ENCODE measurements at regions of chr14 and their contacts with region 1.

Region 1: GRCh38 chr14:100375963-100376735 is 53.0 kb downstream of the SLC25A47 start:
- DNase-seq: peak; percentile 96
- ATAC-seq: peak; percentile 70
- H3K4me3 Mint-ChIP-seq: peak within 1 kb of the TSS; percentile 99
- H3K27ac Mint-ChIP-seq: peak within 1 kb of the TSS; percentile 98
- H3K4me1 Mint-ChIP-seq: peaks cover 37% of the 10 kb centered on the region
- H3K27me3 Mint-ChIP-seq: no peaks in the 10 kb centered on the region

Region 2: GRCh38 chr14:99604283-99604765 is 771.8 kb before region 1 on chr14:
- CTCF ChIA-PET with region 1: interaction called, 3 read pairs
- POLR2A ChIA-PET with region 1: no interaction called
- intact Hi-C with region 1: loop called in 1 of 2 experiments (anchors 1 kb)
- DNase-seq: peak; percentile 96
- ATAC-seq: peak; percentile 94
- H3K4me3 Mint-ChIP-seq: peak overlapping the region; percentile 72
- H3K27ac Mint-ChIP-seq: peak overlapping the region; percentile 72
- H3K4me1 Mint-ChIP-seq: peaks cover 28% of the 10 kb centered on the region
- H3K27me3 Mint-ChIP-seq: peaks cover 2% of the 10 kb centered on the region

Region 3: DNA sequence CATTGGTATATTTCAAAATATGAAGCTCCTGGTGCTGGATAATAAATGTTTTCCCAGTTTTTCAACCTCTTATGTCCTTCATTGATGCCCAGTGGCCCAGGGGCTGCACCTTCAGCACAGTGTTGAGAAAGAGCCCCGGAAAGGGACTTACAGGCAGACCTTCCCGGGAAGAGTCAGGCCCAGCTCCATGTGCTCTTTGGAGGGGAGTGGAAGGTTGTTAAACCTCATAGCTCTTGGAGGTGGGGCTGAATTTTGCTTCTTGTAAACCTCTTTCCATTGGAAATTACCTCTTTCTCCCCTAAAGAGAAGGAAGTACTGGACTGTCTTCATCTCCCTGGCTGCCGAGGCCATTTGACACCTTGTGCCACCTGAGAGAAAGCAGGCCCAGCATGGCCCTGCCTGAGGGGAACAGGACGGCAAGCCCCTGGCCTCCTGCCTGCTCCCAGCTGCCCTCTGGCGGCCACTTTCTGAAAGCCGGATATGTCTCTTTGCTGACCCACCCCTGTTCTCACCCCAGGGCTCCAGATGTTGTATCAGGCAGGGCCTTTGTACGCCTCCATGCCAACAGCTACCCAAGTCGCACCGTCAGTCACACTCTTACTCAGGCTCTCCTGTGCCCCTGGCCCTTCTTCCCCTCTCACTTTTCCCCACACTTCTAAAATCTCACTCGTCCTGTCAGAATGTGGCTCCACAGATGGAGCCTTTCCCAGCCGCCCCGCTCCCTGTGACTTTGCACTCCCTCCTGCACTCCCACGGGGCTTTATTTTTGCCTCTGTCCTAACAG is 267.9 kb before region 1 on chr14:
- CTCF ChIA-PET with region 1: no interaction called
- POLR2A ChIA-PET with region 1: no interaction called
- intact Hi-C with region 1: loop called in 1 of 2 experiments (anchors 1 kb)
- DNase-seq: peak; percentile 94
- ATAC-seq: peak; percentile 53
- H3K4me3 Mint-ChIP-seq: no peak overlapping the region
- H3K27ac Mint-ChIP-seq: peak overlapping the region; percentile 92
- H3K4me1 Mint-ChIP-seq: peaks cover 74% of the 10 kb centered on the region
- H3K27me3 Mint-ChIP-seq: no peaks in the 10 kb centered on the region

Region 4: DNA sequence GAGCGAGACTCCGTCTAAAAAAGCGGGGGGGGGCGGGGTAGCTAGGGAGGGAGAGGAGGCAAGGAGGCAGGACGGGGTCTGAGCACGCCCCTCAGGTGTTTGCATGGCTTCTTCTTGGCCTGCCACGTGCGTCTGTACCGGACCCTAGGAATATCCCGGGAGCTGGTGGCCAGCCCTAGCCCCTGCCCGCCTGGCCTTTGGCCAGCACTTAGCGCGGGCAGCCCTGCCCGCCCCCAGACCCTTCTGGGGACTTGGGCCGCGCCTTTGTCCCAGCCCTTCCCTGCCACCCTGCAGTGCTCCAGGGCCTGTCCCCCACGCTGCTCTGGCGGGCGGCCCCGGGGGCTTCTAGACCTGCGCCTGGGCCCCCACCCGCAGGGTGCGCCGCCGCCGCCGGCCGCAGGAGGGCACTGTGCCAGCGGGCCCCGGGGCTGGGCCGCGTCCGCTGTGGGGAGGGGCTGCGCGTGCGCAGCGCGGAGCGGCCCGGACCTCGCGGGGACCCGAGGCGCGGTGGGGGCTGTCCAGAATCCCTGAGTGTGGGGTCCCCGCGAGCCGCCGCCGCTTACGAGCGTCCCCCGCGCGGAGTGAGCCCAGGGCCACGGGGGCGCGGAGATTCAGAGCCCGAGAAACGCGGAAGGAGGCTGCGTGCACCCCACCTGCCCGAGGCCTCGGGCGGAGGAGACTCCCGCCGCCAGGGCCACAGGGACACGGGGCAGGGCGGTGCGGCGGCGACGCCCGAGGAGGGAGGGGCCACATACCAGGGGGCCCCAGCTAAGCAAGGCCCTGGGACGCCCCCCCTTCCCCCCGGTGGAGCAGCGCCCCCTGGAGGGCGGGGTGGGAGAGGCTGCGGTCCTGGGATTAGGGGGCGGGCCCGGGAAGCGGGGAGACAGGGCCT is 90.9 kb before region 1 on chr14:
- CTCF ChIA-PET with region 1: interaction called, 4 read pairs
- POLR2A ChIA-PET with region 1: interaction called, 5 read pairs
- intact Hi-C with region 1: loop called (anchors 1 kb)
- DNase-seq: peak; percentile 88
- ATAC-seq: peak; percentile 89
- H3K4me3 Mint-ChIP-seq: peak overlapping the region; percentile 68
- H3K27ac Mint-ChIP-seq: no peak overlapping the region
- H3K4me1 Mint-ChIP-seq: peaks cover 7% of the 10 kb centered on the region
- H3K27me3 Mint-ChIP-seq: no peaks in the 10 kb centered on the region

Region 5: DNA sequence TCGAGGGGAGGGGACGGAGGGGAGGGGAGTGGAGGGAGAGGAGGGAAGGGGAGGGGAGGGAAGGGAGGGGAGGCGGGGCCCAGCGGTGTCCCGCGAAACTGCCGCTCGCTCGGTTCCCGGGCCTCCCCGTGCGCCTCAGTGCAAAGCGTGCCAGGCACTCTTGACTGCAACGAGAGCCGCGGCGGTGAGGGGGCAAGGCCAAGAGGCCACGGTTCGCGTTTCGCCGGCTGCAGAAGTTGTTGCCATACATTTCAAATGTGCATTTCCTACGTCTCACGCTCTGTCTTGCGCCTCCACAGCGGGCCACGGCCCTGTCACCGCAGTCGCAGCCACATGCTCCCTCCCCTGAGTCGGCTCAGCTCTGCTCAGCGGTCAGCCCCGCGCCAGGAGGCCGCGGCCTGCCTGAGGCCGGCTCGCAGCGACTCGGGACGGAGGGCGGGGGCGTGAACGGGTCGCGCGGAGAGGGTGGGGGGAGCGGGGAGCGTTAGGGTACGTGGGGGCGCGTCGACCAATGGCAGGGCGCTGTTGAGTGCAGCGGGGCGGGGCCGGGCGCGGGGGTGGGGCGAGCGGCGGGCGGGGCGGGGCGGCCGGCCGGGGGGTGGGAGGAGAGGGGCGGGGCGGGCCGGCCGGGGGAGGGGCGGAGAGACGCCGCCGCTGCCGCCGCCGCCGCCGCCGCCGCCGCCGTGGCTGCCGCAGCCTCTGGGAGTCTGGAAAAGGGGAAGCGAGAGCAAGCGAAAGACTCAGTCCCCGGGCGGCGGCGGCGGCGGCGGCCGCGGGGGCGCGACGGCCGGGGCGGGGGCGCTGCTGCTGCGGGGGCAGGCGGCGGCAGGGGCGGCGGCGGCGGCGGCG is 1385.1 kb after region 1 on chr14 and contains the start of gene PPP2R5C:
- CTCF ChIA-PET with region 1: no interaction called
- POLR2A ChIA-PET with region 1: no interaction called
- intact Hi-C with region 1: loop called in 1 of 2 experiments (anchors 2 kb)
- DNase-seq: peak; percentile 94
- ATAC-seq: peak; percentile 65
- H3K4me3 Mint-ChIP-seq: peak within 1 kb of the TSS; percentile 85
- H3K27ac Mint-ChIP-seq: peak within 1 kb of the TSS; percentile 78
- H3K4me1 Mint-ChIP-seq: peaks cover 43% of the 10 kb centered on the region
- H3K27me3 Mint-ChIP-seq: no peaks in the 10 kb centered on the region
- total RNA-seq, gene PPP2R5C: 232 to 281 TPM